OCI-LY7 (cell line): ENCODE measurements at regions of chr1 and their contacts with region 1.

Region 1: DNA sequence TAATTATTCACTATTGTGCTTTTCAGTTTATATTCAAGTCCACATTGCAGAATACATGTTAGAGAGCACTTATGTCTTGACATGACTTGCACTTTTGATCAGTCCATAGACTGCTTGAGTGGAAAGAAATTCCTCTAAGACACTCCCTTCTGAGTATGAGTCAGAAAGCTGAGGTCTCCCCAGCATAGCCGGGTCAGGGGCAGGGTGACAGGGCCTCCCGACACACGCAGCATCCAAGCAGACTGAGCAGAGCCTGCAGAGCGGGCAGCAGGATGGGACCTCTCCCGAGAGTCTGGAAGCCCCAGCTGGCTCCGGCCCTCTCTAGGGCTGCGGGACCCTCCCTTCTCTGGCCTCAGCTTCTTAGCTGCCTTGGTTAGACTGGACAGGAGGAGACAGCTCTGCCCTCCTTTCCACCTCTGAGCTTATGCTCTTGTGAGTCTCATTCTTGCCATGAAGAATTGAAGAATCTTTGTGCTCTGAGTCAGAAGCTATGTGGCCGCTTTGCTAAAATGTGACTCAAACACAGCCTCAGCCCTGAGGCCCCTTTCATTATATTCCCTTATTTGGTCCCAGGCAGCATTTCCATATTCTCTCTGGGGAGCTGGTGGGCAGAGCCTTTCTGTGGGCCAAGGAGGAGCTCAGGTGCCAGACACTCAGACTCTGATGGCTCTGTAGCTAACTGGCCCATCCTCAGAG is 11.2 kb upstream of the CAPN2 start:
- DNase-seq: no peak
- H3K4me3 ChIP-seq: no peak overlapping the region
- H3K27ac ChIP-seq: no peak overlapping the region
- H3K4me1 ChIP-seq: no peaks in the 10 kb centered on the region
- CTCF ChIP-seq: no peak

Region 2: DNA sequence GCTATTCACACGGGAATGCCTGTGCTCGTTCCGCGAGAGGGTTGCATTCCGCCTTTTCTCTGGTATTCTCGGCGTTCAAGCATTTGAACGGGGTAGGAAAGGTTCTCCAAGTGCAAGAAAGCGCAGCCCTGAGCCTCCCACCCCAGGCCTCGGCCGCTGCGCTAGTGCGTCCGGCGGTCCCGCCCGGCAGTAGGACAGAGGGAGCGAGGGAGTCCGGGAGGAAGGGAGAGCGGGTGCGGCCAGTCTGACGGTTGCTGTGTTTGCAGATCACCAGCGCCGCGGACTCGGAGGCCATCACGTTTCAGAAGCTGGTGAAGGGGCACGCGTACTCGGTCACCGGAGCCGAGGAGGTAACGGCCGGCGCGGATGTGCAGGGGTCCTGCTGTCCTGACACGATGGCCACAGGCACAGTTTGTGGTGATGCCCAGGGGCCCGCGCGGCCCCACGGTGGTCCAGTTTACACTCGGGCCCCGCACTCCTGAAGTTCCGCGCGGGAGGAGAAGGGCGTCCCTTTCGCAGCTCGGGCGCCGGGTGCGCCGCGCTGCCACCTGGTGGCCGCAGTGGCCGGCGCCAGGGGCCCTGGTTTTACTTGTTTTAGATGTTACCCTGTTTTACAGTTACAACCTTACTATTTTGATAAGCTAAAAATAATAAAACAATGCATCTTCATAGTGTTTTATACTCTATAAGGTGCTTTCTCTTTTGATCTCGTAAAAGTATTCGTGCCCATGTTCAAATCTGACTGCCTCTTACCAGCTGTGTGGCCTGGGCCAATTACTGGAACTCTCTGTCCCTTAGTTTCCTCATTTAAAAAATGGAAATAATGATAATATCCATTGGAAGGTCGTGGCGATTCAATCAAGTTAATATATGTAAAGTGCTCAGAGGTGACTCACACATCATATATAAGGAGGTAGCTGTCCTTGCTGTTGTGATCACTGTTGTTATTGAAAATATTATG is 48.0 kb after region 1 on chr1:
- CTCF ChIA-PET with region 1: no interaction called
- POLR2A ChIA-PET with region 1: no interaction called
- intact Hi-C with region 1: loop called (anchors 1 kb)
- DNase-seq: peak; percentile 20
- H3K4me3 ChIP-seq: no peak overlapping the region
- H3K27ac ChIP-seq: no peak overlapping the region
- H3K4me1 ChIP-seq: no peaks in the 10 kb centered on the region
- CTCF ChIP-seq: peak; percentile 91

Region 3: GRCh38 chr1:223842784-223843183 is 141.7 kb after region 1 on chr1:
- CTCF ChIA-PET with region 1: no interaction called
- POLR2A ChIA-PET with region 1: no interaction called
- intact Hi-C with region 1: no loop called
- DNase-seq: no peak
- H3K4me3 ChIP-seq: no peak overlapping the region
- H3K27ac ChIP-seq: no peak overlapping the region
- H3K4me1 ChIP-seq: peaks cover 26% of the 10 kb centered on the region
- CTCF ChIP-seq: no peak

Region 4: GRCh38 chr1:224106568-224107281 is 405.6 kb after region 1 on chr1:
- CTCF ChIA-PET with region 1: no interaction called
- POLR2A ChIA-PET with region 1: no interaction called
- intact Hi-C with region 1: loop called (anchors 2 kb)
- DNase-seq: peak; percentile 73
- H3K4me3 ChIP-seq: no peak overlapping the region
- H3K27ac ChIP-seq: no peak overlapping the region
- H3K4me1 ChIP-seq: no peaks in the 10 kb centered on the region
- CTCF ChIP-seq: peak; percentile 79